Naive thymus-derived CD4-positive, alpha-beta T cell (primary cell): ENCODE measurements at regions of chr1 and their contacts with region 1.

Region 1: GRCh38 chr1:150979092-150980056 is 2.7 kb upstream of the ANXA9 start:
- DNase-seq: peak; percentile 68 to 93 (median 84)
- ATAC-seq: peak; percentile 81
- H3K4me3 ChIP-seq: peak overlapping the region; percentile 39
- H3K4me3 Mint-ChIP-seq: peak overlapping the region in 9 of 10 donors; percentile 39 to 73 (median 61)
- H3K27ac ChIP-seq: peak overlapping the region; percentile 67
- H3K27ac Mint-ChIP-seq: peak overlapping the region; percentile 9 to 83 (median 62)
- H3K4me1 ChIP-seq: peaks cover 24 to 34% of the 10 kb centered on the region in 2 donors
- H3K4me1 Mint-ChIP-seq: peaks cover 14 to 44% (median 37%) of the 10 kb centered on the region in 7 donors
- H3K27me3 ChIP-seq: no peaks in the 10 kb centered on the region
- H3K27me3 Mint-ChIP-seq: no peaks in the 10 kb centered on the region

Region 2: GRCh38 chr1:150486964-150487762 is 492.2 kb before region 1 on chr1 and contains the start of gene TARS2:
- CTCF ChIA-PET with region 1: no interaction called
- POLR2A ChIA-PET with region 1: interaction called, 3 read pairs
- intact Hi-C with region 1: loop called in 1 of 2 experiments (anchors 10 kb)
- DNase-seq: peak; percentile 71 to 97 (median 95)
- ATAC-seq: peak; percentile 100
- H3K4me3 ChIP-seq: peak within 1 kb of the TSS; percentile 95
- H3K4me3 Mint-ChIP-seq: peak within 1 kb of the TSS; percentile 91 to 100 (median 96)
- H3K27ac ChIP-seq: peak within 1 kb of the TSS; percentile 83
- H3K27ac Mint-ChIP-seq: peak within 1 kb of the TSS; percentile 92 to 100 (median 99)
- H3K4me1 ChIP-seq: peaks cover 4 to 8% of the 10 kb centered on the region in 2 donors
- H3K4me1 Mint-ChIP-seq: peaks cover 5 to 28% (median 20%) of the 10 kb centered on the region in 7 donors
- H3K27me3 ChIP-seq: no peaks in the 10 kb centered on the region
- H3K27me3 Mint-ChIP-seq: no peaks in the 10 kb centered on the region
- total RNA-seq, gene TARS2: 30.3 to 39.0 (median 36.4) TPM

Region 3: GRCh38 chr1:150846473-150847146 is 132.8 kb before region 1 on chr1:
- CTCF ChIA-PET with region 1: no interaction called
- POLR2A ChIA-PET with region 1: no interaction called
- intact Hi-C with region 1: no loop called
- DNase-seq: no peak
- ATAC-seq: no peak
- H3K4me3 ChIP-seq: no peak overlapping the region
- H3K4me3 Mint-ChIP-seq: no peak overlapping the region
- H3K27ac ChIP-seq: no peak overlapping the region
- H3K27ac Mint-ChIP-seq: peak overlapping the region in 2 of 9 donors; percentile 3 to 29
- H3K4me1 ChIP-seq: peaks cover 0 to 12% of the 10 kb centered on the region in 2 donors
- H3K4me1 Mint-ChIP-seq: peaks cover 15 to 31% (median 19%) of the 10 kb centered on the region in 7 donors
- H3K27me3 ChIP-seq: no peaks in the 10 kb centered on the region
- H3K27me3 Mint-ChIP-seq: no peaks in the 10 kb centered on the region

Region 4: GRCh38 chr1:150925816-150926741 is 53.3 kb before region 1 on chr1 and contains the start of gene SETDB1:
- CTCF ChIA-PET with region 1: no interaction called
- POLR2A ChIA-PET with region 1: interaction called, 4 read pairs
- intact Hi-C with region 1: loop called (anchors 1 to 2 kb)
- DNase-seq: peak; percentile 69 to 93 (median 90)
- ATAC-seq: peak; percentile 98
- H3K4me3 ChIP-seq: peak within 1 kb of the TSS; percentile 92
- H3K4me3 Mint-ChIP-seq: peak within 1 kb of the TSS; percentile 92 to 97 (median 94)
- H3K27ac ChIP-seq: peak within 1 kb of the TSS; percentile 91
- H3K27ac Mint-ChIP-seq: peak within 1 kb of the TSS; percentile 92 to 99 (median 95)
- H3K4me1 ChIP-seq: peaks cover 0 to 7% of the 10 kb centered on the region in 2 donors
- H3K4me1 Mint-ChIP-seq: peaks cover 15 to 35% (median 27%) of the 10 kb centered on the region in 7 donors
- H3K27me3 ChIP-seq: no peaks in the 10 kb centered on the region
- H3K27me3 Mint-ChIP-seq: no peaks in the 10 kb centered on the region
- total RNA-seq, gene SETDB1: 57.3 to 94.9 (median 61.7) TPM

Region 5: GRCh38 chr1:150995896-150996295 is 16.5 kb after region 1 on chr1:
- CTCF ChIA-PET with region 1: interaction called, 56 read pairs
- POLR2A ChIA-PET with region 1: interaction called, 8 read pairs
- intact Hi-C with region 1: loop called in 1 of 2 experiments (anchors 1 kb)
- DNase-seq: peak in 2 of 9 donors; percentile 22 to 41
- ATAC-seq: peak; percentile 75
- H3K4me3 ChIP-seq: no peak overlapping the region
- H3K4me3 Mint-ChIP-seq: no peak overlapping the region
- H3K27ac ChIP-seq: peak overlapping the region; percentile 41
- H3K27ac Mint-ChIP-seq: peak overlapping the region; percentile 19 to 91 (median 69)
- H3K4me1 ChIP-seq: peaks cover 3 to 21% of the 10 kb centered on the region in 2 donors
- H3K4me1 Mint-ChIP-seq: peaks cover 5 to 25% (median 21%) of the 10 kb centered on the region in 7 donors
- H3K27me3 ChIP-seq: no peaks in the 10 kb centered on the region
- H3K27me3 Mint-ChIP-seq: no peaks in the 10 kb centered on the region

Region 6: GRCh38 chr1:151059078-151059907 is 79.9 kb after region 1 on chr1 and contains the start of gene CDC42SE1:
- CTCF ChIA-PET with region 1: interaction called, 3 read pairs
- POLR2A ChIA-PET with region 1: interaction called, 7 read pairs
- intact Hi-C with region 1: loop called in 1 of 2 experiments (anchors 1 kb)
- DNase-seq: peak; percentile 76 to 85 (median 82)
- ATAC-seq: peak; percentile 84
- H3K4me3 ChIP-seq: peak within 1 kb of the TSS; percentile 82
- H3K4me3 Mint-ChIP-seq: peak within 1 kb of the TSS; percentile 95 to 100 (median 99)
- H3K27ac ChIP-seq: peak within 1 kb of the TSS; percentile 99
- H3K27ac Mint-ChIP-seq: peak within 1 kb of the TSS; percentile 93 to 99 (median 95)
- H3K4me1 ChIP-seq: peaks cover 11 to 26% of the 10 kb centered on the region in 2 donors
- H3K4me1 Mint-ChIP-seq: peaks cover 35 to 55% (median 41%) of the 10 kb centered on the region in 7 donors
- H3K27me3 ChIP-seq: no peaks in the 10 kb centered on the region
- H3K27me3 Mint-ChIP-seq: no peaks in the 10 kb centered on the region
- total RNA-seq, gene CDC42SE1: 362 to 516 (median 425) TPM